Posterior cingulate gyrus (tissue), 11 donors: ENCODE measurements at regions of chr5 and their contacts with region 1.

Region 1: GRCh38 chr5:161846746-161847145 is 1.2 kb upstream of the GABRA1 start:
- DNase-seq: peak in 2 of 10 donors; percentile 4 to 34

Region 2: GRCh38 chr5:161544350-161544765 is 302.4 kb before region 1 on chr5:
- intact Hi-C with region 1: loop called (anchors 5 kb)
- DNase-seq: peak; percentile 33 to 95 (median 64)

Region 3: GRCh38 chr5:162174358-162174974 is 327.7 kb after region 1 on chr5:
- intact Hi-C with region 1: no loop called
- DNase-seq: no peak